ENCODE measurements at regions of chr11 and their contacts with region 1.

Region 1: DNA sequence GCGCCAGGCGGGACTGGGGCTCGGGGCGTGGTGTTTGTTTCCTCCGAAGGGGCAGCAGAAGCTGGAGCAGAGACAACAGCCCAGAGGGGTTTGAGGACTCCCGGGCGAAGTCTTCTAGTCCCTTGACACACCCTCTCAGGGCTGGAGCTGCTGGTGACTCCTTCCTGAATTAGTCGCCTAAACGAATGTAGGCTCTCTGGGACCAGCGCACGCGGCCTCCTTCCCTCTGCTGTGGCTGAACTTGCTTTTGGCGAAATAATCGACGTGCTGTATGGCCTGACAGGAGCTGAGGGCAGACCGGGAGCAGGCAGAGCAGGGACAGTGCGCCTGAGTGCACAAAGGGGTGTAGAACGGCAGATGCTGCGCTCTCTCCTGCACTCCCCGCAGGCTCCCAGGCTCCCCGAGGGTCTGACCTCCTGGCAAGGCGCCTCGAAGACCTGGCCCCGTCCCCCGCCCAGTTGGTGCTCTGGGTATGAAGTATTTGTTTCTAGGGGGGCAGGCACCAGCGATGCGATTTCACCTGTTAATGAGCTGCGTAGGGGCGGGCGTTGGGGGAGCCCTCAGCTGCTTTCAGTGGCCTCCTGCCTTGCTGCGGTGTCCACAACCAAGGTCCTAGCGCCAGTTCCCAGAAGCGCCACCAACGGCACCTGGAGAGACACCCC is 5.3 kb downstream of the SLC17A6 start:
- DNase-seq: peak in 2 of 4 donors; percentile 11 to 17
- ATAC-seq: no peak
- H3K4me3 ChIP-seq: no peak overlapping the region
- H3K27ac ChIP-seq: no peak overlapping the region
- H3K4me1 ChIP-seq: peaks cover 20% of the 10 kb centered on the region
- H3K27me3 ChIP-seq: peaks cover 0 to 33% of the 10 kb centered on the region in 2 donors
- CTCF ChIP-seq: no peak
- POLR2A ChIP-seq: no peak

Region 2: GRCh38 chr11:22539821-22540256 is 196.3 kb after region 1 on chr11:
- intact Hi-C with region 1: loop called (anchors 10 kb)
- DNase-seq: peak in 2 of 4 donors; percentile 7 to 22
- ATAC-seq: peak; percentile 71
- H3K4me3 ChIP-seq: no peak overlapping the region
- H3K27ac ChIP-seq: no peak overlapping the region
- H3K4me1 ChIP-seq: no peaks in the 10 kb centered on the region
- H3K27me3 ChIP-seq: no peaks in the 10 kb centered on the region
- CTCF ChIP-seq: peak; percentile 52 to 75 (median 61)
- POLR2A ChIP-seq: no peak

Measured in body of pancreas (tissue), 4 donors.